AG04449 (cell line): ENCODE measurements at regions of chr16 and their contacts with region 1.

Region 1: GRCh38 chr16:85615852-85616606 is 2.9 kb downstream of the GSE1 start:
- DNase-seq: no peak
- H3K4me3 ChIP-seq: no peak overlapping the region; the same call in none of the 2 replicates
- CTCF ChIP-seq: peak; percentile 94

Region 2: DNA sequence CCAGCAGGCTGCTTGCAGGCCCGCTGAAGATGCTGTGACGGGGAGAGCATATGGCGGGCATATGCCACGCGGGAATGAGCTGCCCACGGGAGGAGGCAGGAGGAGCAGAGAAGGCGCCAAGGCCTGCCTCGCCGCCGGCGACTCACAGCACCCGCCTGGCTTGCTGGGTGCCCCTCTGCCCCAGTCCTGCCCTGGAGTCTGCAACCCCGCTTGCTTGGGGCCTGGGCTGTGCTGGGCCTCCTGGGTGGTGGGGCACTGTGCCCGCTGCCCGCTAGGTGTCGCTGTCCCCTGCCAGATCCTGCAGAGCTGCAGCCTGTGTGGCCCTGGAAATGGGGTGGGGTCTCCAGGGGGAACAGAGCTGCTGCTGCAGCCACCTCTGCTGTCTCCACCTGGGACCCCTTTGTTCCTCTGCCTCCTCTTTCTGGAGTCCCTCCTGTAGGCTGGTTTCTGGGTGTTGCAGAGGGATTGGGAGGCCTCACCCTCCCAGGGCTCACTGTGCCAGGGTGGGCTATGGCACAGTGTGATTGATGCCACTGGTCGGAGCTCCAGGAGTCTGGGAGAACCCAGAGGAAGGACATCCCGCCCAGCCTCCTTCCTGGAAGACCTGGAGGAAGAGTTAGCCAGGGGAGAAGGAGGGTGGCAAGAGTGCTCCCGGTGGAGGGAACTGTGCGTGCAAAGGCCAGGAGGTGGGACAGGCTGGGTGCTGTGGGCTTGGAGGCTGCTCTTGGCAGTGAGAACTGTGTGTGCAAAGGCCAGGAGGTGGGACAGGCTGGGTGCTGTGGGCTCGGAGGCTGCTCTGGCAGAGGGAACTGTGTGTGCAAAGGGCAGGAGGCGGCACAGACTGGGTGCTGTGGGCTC is 362.7 kb before region 1 on chr16:
- CTCF ChIA-PET with region 1: interaction called, 32 read pairs
- POLR2A ChIA-PET with region 1: no interaction called
- DNase-seq: no peak
- H3K4me3 ChIP-seq: no peak overlapping the region
- CTCF ChIP-seq: peak; percentile 97

Region 3: GRCh38 chr16:85296859-85297660 is 319.0 kb before region 1 on chr16:
- CTCF ChIA-PET with region 1: interaction called, 12 read pairs
- POLR2A ChIA-PET with region 1: no interaction called
- DNase-seq: no peak
- H3K4me3 ChIP-seq: no peak overlapping the region
- CTCF ChIP-seq: peak; percentile 88

Region 4: GRCh38 chr16:85369741-85370528 is 246.1 kb before region 1 on chr16:
- CTCF ChIA-PET with region 1: interaction called, 48 read pairs
- POLR2A ChIA-PET with region 1: no interaction called
- DNase-seq: no peak
- H3K4me3 ChIP-seq: no peak overlapping the region
- CTCF ChIP-seq: peak; percentile 86

Region 5: DNA sequence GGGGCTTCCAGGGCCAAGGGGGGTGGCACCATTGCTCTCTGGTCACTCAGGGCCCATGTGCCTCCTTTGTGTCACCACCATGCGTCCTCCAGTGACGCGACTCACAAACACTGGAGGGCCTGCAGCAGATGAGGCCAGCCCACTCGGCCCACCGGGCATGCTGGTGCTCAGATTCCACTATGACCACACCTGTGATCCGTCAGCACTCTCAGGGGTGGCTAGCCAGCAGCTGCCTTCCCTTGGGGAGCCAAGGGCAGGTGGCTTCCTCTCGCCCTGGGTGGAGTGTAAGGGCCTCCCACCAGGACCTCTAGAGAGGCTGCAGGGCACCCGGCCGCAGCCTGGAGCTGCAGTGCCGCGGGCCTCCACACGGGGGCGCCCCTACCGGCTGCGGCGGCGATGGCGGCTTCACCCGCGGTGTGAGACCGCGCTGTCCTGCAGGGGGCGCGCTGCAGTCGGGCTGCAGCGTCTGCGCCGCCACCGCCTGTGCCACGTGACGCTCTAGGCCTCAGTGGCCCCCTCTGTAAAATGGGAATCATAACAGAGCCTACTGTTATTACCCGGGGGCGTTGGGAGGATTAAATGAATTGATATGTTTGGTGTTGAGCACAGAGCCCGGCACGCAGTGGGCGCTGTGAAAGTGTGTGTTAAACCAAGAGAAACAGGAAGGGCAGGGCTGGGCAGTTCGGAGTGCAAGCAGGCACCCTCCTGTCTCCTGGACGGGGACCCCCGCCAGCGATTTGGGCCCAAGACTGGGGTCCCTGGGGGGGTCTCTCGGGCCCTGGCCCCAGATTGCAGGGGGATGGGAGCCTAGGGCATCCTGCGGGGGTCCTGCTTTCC is 195.3 kb before region 1 on chr16:
- CTCF ChIA-PET with region 1: interaction called, 59 read pairs
- POLR2A ChIA-PET with region 1: no interaction called
- DNase-seq: no peak
- H3K4me3 ChIP-seq: no peak overlapping the region
- CTCF ChIP-seq: peak; percentile 96

Region 6: GRCh38 chr16:85626191-85626981 is 10.4 kb after region 1 on chr16:
- CTCF ChIA-PET with region 1: interaction called, 119 read pairs
- POLR2A ChIA-PET with region 1: no interaction called
- DNase-seq: no peak
- H3K4me3 ChIP-seq: no peak overlapping the region
- CTCF ChIP-seq: no peak

Region 7: DNA sequence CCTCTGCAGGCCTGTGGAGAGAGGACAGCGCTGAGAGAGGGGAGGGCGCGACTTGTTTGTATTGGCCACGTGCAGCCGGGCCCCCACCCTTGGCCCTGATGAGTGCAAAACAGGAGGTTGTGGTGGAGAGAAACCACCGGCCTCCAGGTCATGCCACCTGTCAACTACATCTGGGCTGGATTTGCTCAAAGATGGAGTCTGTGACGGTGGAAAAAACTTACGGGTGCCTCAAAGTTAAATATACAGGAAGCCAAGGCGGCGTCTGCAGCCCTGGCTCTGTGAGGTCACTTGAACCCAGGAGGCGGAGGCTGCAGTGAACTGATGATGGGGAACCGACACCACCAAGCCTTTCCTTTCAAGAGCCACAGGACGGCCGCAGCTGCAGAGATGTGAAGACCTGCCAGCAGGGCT is 119.2 kb after region 1 on chr16:
- CTCF ChIA-PET with region 1: no interaction called
- POLR2A ChIA-PET with region 1: no interaction called
- DNase-seq: no peak
- H3K4me3 ChIP-seq: no peak overlapping the region
- CTCF ChIP-seq: no peak